Right lobe of liver (tissue), 6 donors: ENCODE measurements at regions of chr1 and their contacts with region 1.

Region 1: DNA sequence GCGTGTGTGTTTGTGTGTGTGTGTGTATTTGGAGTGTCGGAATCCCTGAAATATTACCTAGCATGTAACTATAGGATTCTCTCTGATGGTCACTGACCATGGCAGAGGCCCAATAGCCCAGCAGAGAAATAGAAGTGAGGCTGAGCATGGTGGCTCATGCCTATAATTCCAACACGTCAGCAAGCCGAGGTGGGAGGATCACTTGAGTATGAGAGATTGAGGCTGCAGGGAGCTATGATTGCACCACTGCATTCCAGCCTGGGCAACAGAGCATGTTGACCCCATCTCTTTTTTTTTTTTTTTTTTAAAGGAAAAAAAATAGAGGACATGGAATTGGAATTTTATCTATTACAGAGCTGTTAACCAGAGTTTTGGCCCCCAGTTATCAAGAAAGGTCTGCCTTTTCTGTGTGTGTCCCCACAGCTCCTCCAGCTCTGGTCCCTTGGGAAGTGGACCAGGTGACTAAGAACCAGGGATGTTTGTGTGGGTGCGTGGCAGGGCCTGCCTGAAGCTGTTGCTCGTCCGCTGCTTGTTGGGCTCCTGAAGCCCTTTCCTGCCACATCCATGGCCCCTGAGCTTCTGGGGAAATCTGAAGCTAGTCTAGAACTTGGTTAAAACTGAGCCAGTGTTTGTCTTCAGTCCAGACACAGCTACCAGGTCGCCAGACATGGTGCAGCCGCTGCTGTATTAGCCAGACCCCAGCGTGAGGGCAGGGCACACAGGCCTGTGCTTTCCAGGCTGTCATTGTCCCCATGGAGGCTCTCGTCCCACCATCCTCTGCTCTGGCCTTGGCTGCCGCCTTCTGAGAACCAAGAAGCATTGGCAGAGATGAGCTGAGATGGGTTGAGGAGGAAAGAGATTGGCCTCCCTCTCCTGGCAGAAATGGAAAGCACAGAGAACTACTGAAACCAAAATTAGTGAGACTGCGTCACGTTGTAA is 25.5 kb downstream of the CAPN9 start:
- DNase-seq: peak in 1 of 3 donors; percentile 60
- ATAC-seq: peak; percentile 84 to 87 (median 86)
- H3K4me3 ChIP-seq: no peak overlapping the region
- H3K27ac ChIP-seq: no peak overlapping the region
- H3K4me1 ChIP-seq: peaks cover 0 to 15% (median 5%) of the 10 kb centered on the region in 4 donors
- H3K27me3 ChIP-seq: no peaks in the 10 kb centered on the region
- CTCF ChIP-seq: peak; percentile 60 to 73 (median 72)
- POLR2A ChIP-seq: no peak

Region 2: DNA sequence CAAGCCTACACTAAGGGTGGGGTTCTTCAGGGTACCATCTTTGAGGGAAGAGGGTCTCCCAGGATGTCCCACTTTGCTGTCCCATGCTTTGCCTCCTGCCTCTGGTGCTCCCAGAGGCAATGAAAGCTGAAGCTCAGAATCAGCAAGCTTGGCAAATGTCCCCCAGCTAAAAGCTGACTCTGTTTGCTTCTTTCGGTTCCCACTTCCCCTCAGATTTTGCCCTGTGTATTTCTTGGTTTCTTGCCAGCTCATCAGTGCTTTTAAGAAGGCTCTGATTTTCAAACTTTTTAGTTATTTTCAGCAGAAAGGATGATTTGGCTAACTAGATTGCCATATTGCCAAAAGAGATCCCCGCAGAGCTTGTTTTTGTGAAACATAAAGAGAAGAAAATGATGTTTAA is 163.5 kb before region 1 on chr1:
- intact Hi-C with region 1: no loop called
- DNase-seq: no peak
- ATAC-seq: peak in 2 of 4 donors; percentile 18 to 46
- H3K4me3 ChIP-seq: no peak overlapping the region
- H3K27ac ChIP-seq: no peak overlapping the region
- H3K4me1 ChIP-seq: no peaks in the 10 kb centered on the region
- H3K27me3 ChIP-seq: no peaks in the 10 kb centered on the region
- CTCF ChIP-seq: no peak
- POLR2A ChIP-seq: no peak

Region 3: GRCh38 chr1:230632273-230632873 is 140.4 kb before region 1 on chr1:
- intact Hi-C with region 1: loop called (anchors 5 to 10 kb)
- DNase-seq: peak in 1 of 3 donors; percentile 59
- ATAC-seq: peak; percentile 96 to 99 (median 97)
- H3K4me3 ChIP-seq: no peak overlapping the region
- H3K27ac ChIP-seq: no peak overlapping the region
- H3K4me1 ChIP-seq: no peaks in the 10 kb centered on the region
- H3K27me3 ChIP-seq: no peaks in the 10 kb centered on the region
- CTCF ChIP-seq: peak; percentile 67 to 85 (median 78)
- POLR2A ChIP-seq: no peak

Region 4: GRCh38 chr1:230713915-230714764 is 58.6 kb before region 1 on chr1 and contains the start of gene AGT:
- intact Hi-C with region 1: loop called in 1 of 2 experiments (anchors 10 kb)
- DNase-seq: peak; percentile 85 to 97 (median 97)
- ATAC-seq: peak; percentile 55 to 84 (median 73)
- H3K4me3 ChIP-seq: peak within 1 kb of the TSS; percentile 63 to 82 (median 81)
- H3K27ac ChIP-seq: peak within 1 kb of the TSS; percentile 75 to 97 (median 83)
- H3K4me1 ChIP-seq: peaks cover 0 to 42% (median 6%) of the 10 kb centered on the region in 4 donors
- H3K27me3 ChIP-seq: no peaks in the 10 kb centered on the region
- CTCF ChIP-seq: no peak
- POLR2A ChIP-seq: peak; percentile 99
- total RNA-seq, gene AGT: 1,076 to 2,346 (median 1,911) TPM

Region 5: GRCh38 chr1:230849451-230850224 is 76.9 kb after region 1 on chr1:
- intact Hi-C with region 1: no loop called
- DNase-seq: peak in 1 of 3 donors; percentile 37
- ATAC-seq: peak; percentile 64 to 89 (median 76)
- H3K4me3 ChIP-seq: no peak overlapping the region
- H3K27ac ChIP-seq: peak overlapping the region in 2 of 3 donors; percentile 49 to 65
- H3K4me1 ChIP-seq: peaks cover 0 to 11% (median 0%) of the 10 kb centered on the region in 4 donors
- H3K27me3 ChIP-seq: no peaks in the 10 kb centered on the region
- CTCF ChIP-seq: no peak
- POLR2A ChIP-seq: no peak